Left lung (tissue), 14 donors: ENCODE measurements at regions of chr6 and their contacts with region 1.

Region 1: GRCh38 chr6:122730775-122731386 is 48.6 kb upstream of the FABP7 start:
- DNase-seq: peak in 2 of 4 donors; percentile 41 to 65
- ATAC-seq: peak; percentile 77
- H3K4me3 ChIP-seq: no peak overlapping the region
- H3K27ac ChIP-seq: no peak overlapping the region
- H3K4me1 ChIP-seq: no peaks in the 10 kb centered on the region
- H3K27me3 ChIP-seq: peaks cover 0 to 4% of the 10 kb centered on the region in 2 donors
- CTCF ChIP-seq: peak; percentile 54 to 68

Region 2: DNA sequence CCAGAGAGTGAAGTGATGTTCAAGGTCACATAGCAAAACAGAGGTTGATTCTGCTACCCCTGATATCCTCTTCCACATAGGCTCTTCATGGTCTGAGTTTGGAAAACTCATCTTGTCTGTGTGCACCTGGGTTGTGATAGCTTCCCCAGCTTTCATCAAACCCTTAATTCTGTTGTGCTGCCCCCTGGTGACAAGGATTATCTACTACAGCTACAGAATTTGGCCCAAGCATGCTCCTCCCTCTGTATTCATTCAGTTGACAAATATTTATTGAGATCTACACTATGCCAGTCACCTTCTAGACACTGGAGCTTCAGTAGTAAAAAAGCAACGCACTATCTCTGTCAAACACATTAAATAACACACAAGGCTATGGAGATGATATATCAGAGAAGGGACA is 108.6 kb after region 1 on chr6:
- intact Hi-C with region 1: loop called in 1 of 2 experiments (anchors 5 kb)
- DNase-seq: peak in 2 of 4 donors; percentile 48 to 49
- ATAC-seq: peak; percentile 93
- H3K4me3 ChIP-seq: no peak overlapping the region
- H3K27ac ChIP-seq: no peak overlapping the region
- H3K4me1 ChIP-seq: no peaks in the 10 kb centered on the region
- H3K27me3 ChIP-seq: no peaks in the 10 kb centered on the region
- CTCF ChIP-seq: peak; percentile 25 to 76

Region 3: DNA sequence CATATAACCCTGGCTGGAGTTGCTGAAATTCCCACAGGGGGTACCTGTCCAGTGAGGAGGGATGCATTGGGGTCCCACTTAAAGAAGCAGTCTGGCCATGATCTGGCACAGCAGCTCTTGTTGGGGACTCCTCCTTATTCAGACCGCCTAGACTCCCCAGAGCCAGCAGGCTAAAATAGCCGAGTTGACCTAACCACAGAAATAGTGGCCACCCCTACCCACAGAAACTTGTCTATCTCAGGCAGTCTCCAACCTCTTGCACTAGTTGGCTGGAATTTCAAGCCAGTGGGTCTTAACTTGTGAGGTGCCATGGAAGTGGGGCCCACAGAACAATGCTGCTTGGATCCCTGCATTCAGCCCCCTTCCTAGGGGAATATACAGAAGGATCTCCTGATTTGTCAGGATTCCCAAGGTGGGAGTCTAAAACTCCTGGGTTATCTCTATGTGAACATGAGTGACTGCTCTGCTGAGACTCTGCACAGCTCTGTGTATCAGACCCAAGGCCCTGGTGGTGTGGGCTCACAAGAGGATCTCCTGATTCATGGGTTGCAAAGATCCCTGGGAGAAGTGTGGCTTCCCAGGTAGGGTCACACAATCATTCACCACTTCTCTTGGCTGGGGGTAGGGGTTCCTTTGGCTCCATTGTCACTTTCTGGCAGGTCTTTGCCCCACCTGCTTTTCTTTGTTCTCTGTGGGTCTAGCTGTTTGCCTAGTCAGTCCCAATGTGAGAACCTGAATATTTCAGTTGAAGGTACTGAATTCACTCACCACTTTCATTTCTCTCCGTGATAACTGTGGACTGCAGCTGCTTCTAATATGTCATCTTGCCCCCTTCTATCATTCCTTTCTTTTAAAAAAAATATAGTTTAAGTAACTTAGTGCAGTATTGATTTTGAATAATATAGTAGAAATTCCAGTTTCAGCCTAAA is 199.6 kb after region 1 on chr6:
- intact Hi-C with region 1: no loop called
- DNase-seq: no peak
- ATAC-seq: no peak
- H3K4me3 ChIP-seq: no peak overlapping the region
- H3K27ac ChIP-seq: no peak overlapping the region
- H3K4me1 ChIP-seq: no peaks in the 10 kb centered on the region
- H3K27me3 ChIP-seq: no peaks in the 10 kb centered on the region
- CTCF ChIP-seq: no peak

Region 4: GRCh38 chr6:123316733-123317323 is 585.9 kb after region 1 on chr6:
- intact Hi-C with region 1: loop called in 1 of 2 experiments (anchors 10 kb)
- DNase-seq: peak in 1 of 4 donors; percentile 6
- ATAC-seq: no peak
- H3K4me3 ChIP-seq: no peak overlapping the region
- H3K27ac ChIP-seq: no peak overlapping the region
- H3K4me1 ChIP-seq: no peaks in the 10 kb centered on the region
- H3K27me3 ChIP-seq: no peaks in the 10 kb centered on the region
- CTCF ChIP-seq: peak; percentile 26 to 54